ENCODE measurements at regions of chr2 and their contacts with region 1.

Region 1: DNA sequence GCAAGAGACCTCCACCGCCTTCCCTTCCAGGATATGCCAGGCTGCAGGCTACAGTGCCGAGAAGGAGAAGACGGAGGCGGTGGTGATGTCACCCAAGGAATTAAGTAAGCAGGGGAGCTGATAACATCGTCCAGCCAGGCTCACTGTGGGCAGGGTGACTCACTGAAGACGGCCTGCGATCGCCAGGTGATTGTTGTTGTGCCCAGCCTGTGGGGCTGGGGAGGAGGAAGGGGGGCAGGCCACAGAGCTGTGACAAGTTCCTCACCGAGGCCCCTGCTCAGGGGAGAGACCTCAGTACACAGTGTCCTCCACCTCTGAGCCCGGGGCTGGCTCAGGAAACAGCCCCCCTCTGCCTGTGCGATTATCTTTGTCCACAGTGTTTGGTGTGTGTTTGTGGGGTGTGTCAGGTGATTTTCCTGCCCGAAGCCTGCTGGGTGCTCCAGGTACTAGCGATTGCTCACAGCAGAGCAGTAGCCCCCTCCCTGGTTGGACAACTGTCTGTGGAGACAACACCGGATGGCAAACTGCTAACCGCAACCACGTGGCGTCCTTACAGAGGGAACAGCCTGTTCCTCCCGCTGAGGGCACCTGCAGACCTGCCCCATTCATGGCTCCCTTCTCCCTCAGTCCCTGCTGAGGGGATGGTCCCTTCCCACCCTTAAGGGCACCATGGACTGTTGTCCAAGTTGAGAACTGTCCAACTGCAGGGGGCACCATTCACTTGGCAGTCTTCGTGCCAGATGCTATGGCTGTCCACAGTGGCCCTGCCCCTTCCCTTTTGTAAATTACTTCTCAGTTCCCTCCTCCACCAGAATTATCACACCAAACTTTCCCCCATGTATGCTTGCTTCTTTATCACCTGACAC is 95.1 kb downstream of the ZFP36L2 start:
- DNase-seq: peak; percentile 90 to 96 (median 91)
- H3K4me3 ChIP-seq: peak overlapping the region; percentile 26 to 31
- H3K4me3 Mint-ChIP-seq: peak overlapping the region; percentile 17 to 86 (median 64)
- H3K27ac ChIP-seq: peak overlapping the region; percentile 83
- H3K27ac Mint-ChIP-seq: peak overlapping the region; percentile 97 to 100 (median 100)
- H3K4me1 ChIP-seq: peaks cover 91% of the 10 kb centered on the region
- H3K4me1 Mint-ChIP-seq: peaks cover 67 to 92% (median 81%) of the 10 kb centered on the region in 4 donors
- H3K27me3 ChIP-seq: no peaks in the 10 kb centered on the region
- H3K27me3 Mint-ChIP-seq: no peaks in the 10 kb centered on the region

Region 2: GRCh38 chr2:42944779-42945415 is 186.4 kb before region 1 on chr2:
- CTCF ChIA-PET with region 1: interaction called, 9 read pairs
- POLR2A ChIA-PET with region 1: no interaction called
- intact Hi-C with region 1: loop called (anchors 2 kb)
- DNase-seq: no peak
- H3K4me3 ChIP-seq: no peak overlapping the region
- H3K4me3 Mint-ChIP-seq: no peak overlapping the region
- H3K27ac ChIP-seq: no peak overlapping the region
- H3K27ac Mint-ChIP-seq: no peak overlapping the region
- H3K4me1 ChIP-seq: no peaks in the 10 kb centered on the region
- H3K4me1 Mint-ChIP-seq: peaks cover 0 to 2% (median under 1%) of the 10 kb centered on the region in 4 donors
- H3K27me3 ChIP-seq: no peaks in the 10 kb centered on the region
- H3K27me3 Mint-ChIP-seq: no peaks in the 10 kb centered on the region

Region 3: DNA sequence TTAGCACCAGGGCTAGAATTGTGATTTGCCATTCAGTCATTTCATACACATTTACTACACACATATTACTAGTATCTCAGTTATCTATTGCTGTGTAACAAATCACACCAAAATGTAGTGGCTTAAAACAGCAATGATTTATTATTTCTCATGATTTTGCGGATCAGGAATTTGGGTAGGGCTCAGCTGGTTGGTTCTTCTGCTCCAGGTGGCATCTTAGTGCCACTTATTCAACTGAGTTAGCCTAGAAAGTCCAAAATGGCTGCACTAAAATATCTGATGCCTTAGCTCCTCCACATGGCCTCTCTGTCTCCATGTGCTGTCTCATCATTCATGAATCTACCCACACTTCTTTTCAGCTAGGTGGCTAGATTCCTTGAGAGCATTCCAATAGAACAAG is 12.0 kb before region 1 on chr2:
- CTCF ChIA-PET with region 1: no interaction called
- POLR2A ChIA-PET with region 1: no interaction called
- intact Hi-C with region 1: no loop called
- DNase-seq: no peak
- H3K4me3 ChIP-seq: no peak overlapping the region
- H3K4me3 Mint-ChIP-seq: no peak overlapping the region
- H3K27ac ChIP-seq: no peak overlapping the region
- H3K27ac Mint-ChIP-seq: no peak overlapping the region
- H3K4me1 ChIP-seq: no peaks in the 10 kb centered on the region
- H3K4me1 Mint-ChIP-seq: peaks cover 0 to 12% (median 3%) of the 10 kb centered on the region in 4 donors
- H3K27me3 ChIP-seq: no peaks in the 10 kb centered on the region
- H3K27me3 Mint-ChIP-seq: peaks cover 0 to 1% of the 10 kb centered on the region in 2 donors

Region 4: GRCh38 chr2:43169987-43170386 is 38.7 kb after region 1 on chr2:
- CTCF ChIA-PET with region 1: interaction called, 361 read pairs
- POLR2A ChIA-PET with region 1: interaction called, 1,220 read pairs
- intact Hi-C with region 1: loop called (anchors 1 kb)
- DNase-seq: peak; percentile 66 to 74 (median 69)
- H3K4me3 ChIP-seq: peak overlapping the region in 1 of 2 donors; percentile 42
- H3K4me3 Mint-ChIP-seq: peak overlapping the region; percentile 36 to 89 (median 82)
- H3K27ac ChIP-seq: peak overlapping the region; percentile 65
- H3K27ac Mint-ChIP-seq: peak overlapping the region; percentile 93 to 99 (median 98)
- H3K4me1 ChIP-seq: peaks cover 83% of the 10 kb centered on the region
- H3K4me1 Mint-ChIP-seq: peaks cover 49 to 85% (median 70%) of the 10 kb centered on the region in 4 donors
- H3K27me3 ChIP-seq: no peaks in the 10 kb centered on the region
- H3K27me3 Mint-ChIP-seq: no peaks in the 10 kb centered on the region

Region 5: DNA sequence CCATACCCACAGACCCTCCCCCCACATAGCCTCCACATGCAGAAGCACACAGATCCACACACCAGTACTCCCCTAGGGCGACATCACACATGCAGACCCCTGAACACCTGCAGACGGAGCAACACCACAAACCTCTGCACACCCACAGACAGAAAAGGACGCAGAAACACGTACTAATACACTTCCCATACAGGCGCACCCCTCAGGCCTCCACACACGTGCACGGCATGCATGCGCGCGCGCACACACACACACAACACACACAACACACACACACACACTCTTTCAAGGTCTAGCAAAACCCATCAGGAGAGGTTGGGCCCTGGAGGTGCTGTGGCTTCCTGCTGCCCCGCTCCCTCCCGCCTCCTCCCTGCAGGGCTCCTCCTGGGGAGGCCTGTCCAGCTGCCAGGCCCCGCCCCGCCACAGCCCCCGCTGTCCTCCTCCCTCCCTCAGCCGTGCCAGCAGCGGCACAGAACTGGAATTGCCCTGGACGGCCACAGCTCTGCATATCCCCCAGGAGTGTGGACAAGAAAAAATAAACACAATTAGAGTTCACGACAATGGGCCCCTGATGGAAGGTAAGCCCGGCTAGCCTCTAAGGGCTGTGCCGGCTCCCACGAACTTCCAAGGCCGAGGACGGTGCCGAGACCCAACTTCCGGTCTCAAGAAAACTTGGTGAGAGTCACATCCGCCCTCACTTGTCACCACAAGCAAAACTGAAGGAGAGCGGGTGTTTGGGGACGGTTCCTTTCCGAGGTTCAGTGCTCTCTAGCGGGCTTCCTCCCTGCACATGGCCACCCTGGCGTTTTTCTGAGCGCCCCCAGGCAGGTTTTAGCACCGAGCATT is 88.3 kb after region 1 on chr2:
- CTCF ChIA-PET with region 1: interaction called, 258 read pairs
- POLR2A ChIA-PET with region 1: interaction called, 6,960 read pairs
- intact Hi-C with region 1: loop called (anchors 1 kb)
- DNase-seq: peak; percentile 88 to 92 (median 91)
- H3K4me3 ChIP-seq: peak overlapping the region; percentile 84 to 92
- H3K4me3 Mint-ChIP-seq: peak overlapping the region; percentile 80 to 98 (median 96)
- H3K27ac ChIP-seq: peak overlapping the region; percentile 90
- H3K27ac Mint-ChIP-seq: peak overlapping the region; percentile 93 to 100 (median 98)
- H3K4me1 ChIP-seq: peaks cover 60% of the 10 kb centered on the region
- H3K4me1 Mint-ChIP-seq: peaks cover 31 to 62% (median 40%) of the 10 kb centered on the region in 4 donors
- H3K27me3 ChIP-seq: no peaks in the 10 kb centered on the region
- H3K27me3 Mint-ChIP-seq: peaks cover 0 to 5% of the 10 kb centered on the region in 2 donors

Region 6: DNA sequence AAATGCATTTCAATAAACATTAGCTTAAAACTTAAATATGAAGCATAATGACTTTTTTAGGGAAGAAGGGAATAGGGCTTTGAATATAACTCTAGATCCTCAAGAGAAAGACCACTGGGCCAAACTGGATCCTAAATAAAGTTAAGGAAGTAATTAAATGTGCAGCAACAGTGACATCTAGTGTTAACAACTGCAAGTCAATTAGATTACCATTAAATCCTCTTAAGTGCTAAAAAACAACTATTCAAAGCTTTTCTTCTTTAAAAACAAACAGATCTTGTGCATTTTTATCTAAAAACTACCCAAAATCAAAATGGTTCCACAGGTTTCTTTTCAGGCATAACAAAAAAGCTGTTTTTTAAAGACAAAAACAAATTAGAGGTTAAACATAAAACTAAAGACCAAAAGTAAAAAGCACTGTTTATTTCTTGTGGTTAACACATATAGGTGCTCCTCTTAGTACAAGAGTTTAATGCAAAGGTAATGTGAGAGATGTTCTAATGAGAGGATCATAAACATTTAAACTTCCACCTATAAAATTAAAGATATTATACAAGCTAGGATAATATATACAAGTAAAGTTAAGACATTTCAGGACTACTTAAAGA is 353.2 kb after region 1 on chr2:
- CTCF ChIA-PET with region 1: interaction called, 120 read pairs
- POLR2A ChIA-PET with region 1: interaction called, 27 read pairs
- intact Hi-C with region 1: loop called (anchors 1 kb)
- DNase-seq: peak in 4 of 5 donors; percentile 46 to 54 (median 52)
- H3K4me3 ChIP-seq: no peak overlapping the region
- H3K4me3 Mint-ChIP-seq: no peak overlapping the region
- H3K27ac ChIP-seq: no peak overlapping the region
- H3K27ac Mint-ChIP-seq: peak overlapping the region in 1 of 7 donors; percentile 22
- H3K4me1 ChIP-seq: peaks cover 4% of the 10 kb centered on the region
- H3K4me1 Mint-ChIP-seq: peaks cover 0 to 7% (median 4%) of the 10 kb centered on the region in 4 donors
- H3K27me3 ChIP-seq: no peaks in the 10 kb centered on the region
- H3K27me3 Mint-ChIP-seq: no peaks in the 10 kb centered on the region

Measured in CD4-positive, alpha-beta memory T cell (primary cell).